Left colon (tissue), 2 donors: ENCODE measurements at regions of chr1 and their contacts with region 1.

Region 1: DNA sequence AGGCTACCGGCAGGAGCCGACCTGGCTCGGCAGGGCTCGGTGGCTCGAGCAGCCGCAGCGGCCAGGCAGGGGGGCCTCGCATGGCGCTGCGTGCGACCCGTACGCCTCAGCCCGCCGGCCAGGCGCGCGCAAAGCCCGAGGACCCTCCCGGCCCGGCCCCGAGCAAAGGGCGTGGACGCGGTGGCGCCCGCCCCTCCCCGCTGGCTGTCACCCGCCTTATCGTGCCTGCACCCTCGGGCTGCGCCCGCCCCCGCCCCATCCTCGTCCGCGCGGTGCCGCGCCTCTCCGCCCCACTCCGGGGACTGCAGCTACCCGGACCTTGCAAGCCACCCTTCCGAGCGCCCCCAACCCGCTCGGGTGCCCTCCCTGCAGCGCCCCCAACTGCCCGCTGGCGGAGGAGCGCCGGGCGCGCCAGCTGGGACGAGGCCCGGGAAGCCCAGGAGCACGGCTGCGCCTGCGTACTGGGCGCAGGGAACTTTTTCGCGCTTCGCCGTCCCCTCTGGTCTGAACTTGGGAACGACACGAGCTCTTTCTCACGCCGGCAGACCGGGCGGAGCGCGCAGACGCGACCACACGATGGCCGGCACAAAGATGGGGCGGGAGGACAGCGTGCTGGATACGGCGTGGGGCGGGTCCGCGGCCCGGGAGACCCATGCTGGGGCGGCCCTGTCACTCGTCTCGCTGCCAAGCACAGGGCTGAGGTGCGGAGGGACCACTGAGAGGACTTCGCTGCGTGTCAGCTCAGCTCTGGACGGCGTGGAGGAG is at the start of gene ABCB10:
- DNase-seq: peak; percentile 95 to 97
- ATAC-seq: peak; percentile 87
- total RNA-seq, gene ABCB10: 25.4 to 28.4 TPM

Region 2: DNA sequence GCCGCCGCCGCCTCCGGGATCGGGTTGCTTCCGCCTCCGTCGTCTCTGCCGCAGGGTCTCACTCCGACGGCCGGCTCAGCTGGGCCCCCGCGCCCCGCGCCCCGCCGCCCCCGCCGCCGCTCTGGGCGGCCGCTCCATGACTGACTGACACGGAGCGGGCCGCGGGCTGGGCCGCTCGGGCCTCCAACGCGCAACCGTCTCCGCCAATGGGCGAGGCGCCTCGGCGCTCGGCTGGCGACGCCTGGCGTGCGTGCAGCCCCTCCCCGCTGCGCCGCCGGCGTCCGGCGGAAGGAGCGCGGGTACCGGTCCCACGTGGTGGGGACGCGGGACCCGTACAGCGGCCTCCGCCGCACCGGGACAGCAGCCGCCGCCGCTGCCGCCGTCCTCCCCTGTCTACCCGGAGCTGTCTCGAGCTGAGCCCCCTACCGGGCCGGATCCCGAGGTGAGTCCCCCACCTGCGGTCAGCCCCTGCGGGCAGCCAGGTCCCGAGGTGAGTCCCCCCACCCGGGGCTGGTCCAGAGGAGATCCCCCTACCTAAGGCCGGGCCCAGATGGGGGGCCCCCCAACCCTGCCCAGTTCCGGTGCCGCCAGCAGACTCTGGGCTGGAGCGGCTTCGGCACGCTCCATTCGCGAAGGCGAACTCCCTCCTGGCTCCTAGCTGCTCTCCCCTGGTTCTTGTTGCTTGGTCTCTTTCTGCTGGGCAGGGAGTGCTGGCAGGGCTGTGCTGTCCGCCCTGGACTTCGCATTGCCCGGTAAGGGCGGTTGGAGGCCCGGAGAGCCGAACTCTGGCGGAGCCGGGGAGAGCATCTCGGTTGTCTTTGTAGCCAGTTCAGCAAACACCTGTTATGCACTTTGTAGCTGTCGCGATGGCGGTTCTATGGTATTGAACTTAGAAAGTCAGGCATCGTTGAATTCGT is 67.4 kb after region 1 on chr1 and contains the starts of genes TAF5L and URB2:
- intact Hi-C with region 1: loop called in 1 of 2 experiments (anchors 10 kb)
- DNase-seq: peak; percentile 86 to 88
- ATAC-seq: peak; percentile 94
- total RNA-seq, gene TAF5L: 24.2 to 24.6 TPM
- total RNA-seq, gene URB2: 5.0 to 7.4 TPM